ENCODE measurements at regions of chr1 and their contacts with region 1.

Region 1: GRCh38 chr1:27525296-27526272 is 35.6 kb upstream of the WASF2 start:
- DNase-seq: no peak
- H3K4me3 ChIP-seq: peak overlapping the region in 1 of 2 donors; percentile 6
- H3K27ac ChIP-seq: peak overlapping the region; percentile 87 to 95
- H3K4me1 ChIP-seq: peaks cover 53% of the 10 kb centered on the region
- H3K27me3 ChIP-seq: no peaks in the 10 kb centered on the region
- CTCF ChIP-seq: no peak
- POLR2A ChIP-seq: no peak

Region 2: GRCh38 chr1:27556781-27557595 is 31.4 kb after region 1 on chr1:
- intact Hi-C with region 1: no loop called
- DNase-seq: peak; percentile 87
- H3K4me3 ChIP-seq: peak overlapping the region in 1 of 2 donors; percentile 11
- H3K27ac ChIP-seq: peak overlapping the region; percentile 76 to 85
- H3K4me1 ChIP-seq: no peaks in the 10 kb centered on the region
- H3K27me3 ChIP-seq: no peaks in the 10 kb centered on the region
- CTCF ChIP-seq: peak; percentile 87 to 95 (median 90)
- POLR2A ChIP-seq: peak; percentile 53

Region 3: GRCh38 chr1:27568300-27569087 is 42.9 kb after region 1 on chr1:
- intact Hi-C with region 1: loop called (anchors 5 kb)
- DNase-seq: peak; percentile 97
- H3K4me3 ChIP-seq: peak overlapping the region; percentile 27 to 30
- H3K27ac ChIP-seq: peak overlapping the region; percentile 86 to 91
- H3K4me1 ChIP-seq: peaks cover 39% of the 10 kb centered on the region
- H3K27me3 ChIP-seq: no peaks in the 10 kb centered on the region
- CTCF ChIP-seq: peak; percentile 89 to 96 (median 94)
- POLR2A ChIP-seq: peak; percentile 91

Region 4: GRCh38 chr1:28482138-28482537 is 956.6 kb after region 1 on chr1:
- intact Hi-C with region 1: no loop called
- DNase-seq: no peak
- H3K4me3 ChIP-seq: no peak overlapping the region
- H3K27ac ChIP-seq: no peak overlapping the region
- H3K4me1 ChIP-seq: no peaks in the 10 kb centered on the region
- H3K27me3 ChIP-seq: no peaks in the 10 kb centered on the region
- CTCF ChIP-seq: no peak
- POLR2A ChIP-seq: no peak

Measured in prostate gland (tissue), 2 donors.